Colonic mucosa (tissue), 4 donors: ENCODE measurements at regions of chr5 and their contacts with region 1.

Region 1: DNA sequence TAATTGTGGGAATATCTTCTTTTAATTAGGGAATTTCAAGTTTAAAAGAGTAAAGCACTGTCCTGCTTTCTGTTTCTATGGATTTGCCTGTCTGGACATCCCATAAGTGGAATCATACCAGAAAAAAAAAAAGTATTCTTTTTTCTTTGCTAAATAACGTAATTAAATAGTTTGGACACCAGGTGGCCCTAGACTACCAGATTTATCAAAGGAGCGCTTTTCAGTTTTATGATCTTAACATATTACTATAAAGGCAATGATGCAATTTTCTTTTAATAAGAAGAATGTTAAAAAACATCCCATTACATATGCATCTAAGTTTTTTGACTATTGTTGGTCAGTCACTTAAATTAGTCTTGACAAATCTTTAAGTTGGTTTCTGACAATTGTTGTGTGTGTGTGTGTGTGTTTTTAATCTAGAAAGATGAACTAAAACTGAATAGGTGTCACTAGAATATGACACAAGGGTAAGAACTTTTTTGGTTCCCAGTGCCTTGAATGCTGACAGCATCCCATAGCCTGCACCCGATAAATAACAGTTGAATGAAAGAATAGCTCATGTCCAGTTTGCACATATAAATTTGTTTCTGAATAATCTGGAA is 49.5 kb downstream of the C5orf22 start:
- DNase-seq: no peak
- H3K4me3 ChIP-seq: no peak overlapping the region
- H3K27ac ChIP-seq: no peak overlapping the region
- H3K4me1 ChIP-seq: no peaks in the 10 kb centered on the region
- H3K27me3 ChIP-seq: no peaks in the 10 kb centered on the region
- CTCF ChIP-seq: peak; percentile 32

Region 2: GRCh38 chr5:31626156-31626555 is 44.6 kb after region 1 on chr5:
- intact Hi-C with region 1: no loop called
- DNase-seq: no peak
- H3K4me3 ChIP-seq: no peak overlapping the region
- H3K27ac ChIP-seq: no peak overlapping the region
- H3K4me1 ChIP-seq: no peaks in the 10 kb centered on the region
- H3K27me3 ChIP-seq: no peaks in the 10 kb centered on the region
- CTCF ChIP-seq: no peak

Region 3: GRCh38 chr5:31757806-31758205 is 176.2 kb after region 1 on chr5:
- intact Hi-C with region 1: no loop called
- DNase-seq: no peak
- H3K4me3 ChIP-seq: no peak overlapping the region
- H3K27ac ChIP-seq: no peak overlapping the region
- H3K4me1 ChIP-seq: no peaks in the 10 kb centered on the region
- H3K27me3 ChIP-seq: no peaks in the 10 kb centered on the region
- CTCF ChIP-seq: no peak

Region 4: GRCh38 chr5:31809050-31809870 is 227.7 kb after region 1 on chr5:
- intact Hi-C with region 1: loop called (anchors 2 kb)
- DNase-seq: peak; percentile 45
- H3K4me3 ChIP-seq: no peak overlapping the region
- H3K27ac ChIP-seq: no peak overlapping the region
- H3K4me1 ChIP-seq: no peaks in the 10 kb centered on the region
- H3K27me3 ChIP-seq: no peaks in the 10 kb centered on the region
- CTCF ChIP-seq: peak; percentile 44

Region 5: DNA sequence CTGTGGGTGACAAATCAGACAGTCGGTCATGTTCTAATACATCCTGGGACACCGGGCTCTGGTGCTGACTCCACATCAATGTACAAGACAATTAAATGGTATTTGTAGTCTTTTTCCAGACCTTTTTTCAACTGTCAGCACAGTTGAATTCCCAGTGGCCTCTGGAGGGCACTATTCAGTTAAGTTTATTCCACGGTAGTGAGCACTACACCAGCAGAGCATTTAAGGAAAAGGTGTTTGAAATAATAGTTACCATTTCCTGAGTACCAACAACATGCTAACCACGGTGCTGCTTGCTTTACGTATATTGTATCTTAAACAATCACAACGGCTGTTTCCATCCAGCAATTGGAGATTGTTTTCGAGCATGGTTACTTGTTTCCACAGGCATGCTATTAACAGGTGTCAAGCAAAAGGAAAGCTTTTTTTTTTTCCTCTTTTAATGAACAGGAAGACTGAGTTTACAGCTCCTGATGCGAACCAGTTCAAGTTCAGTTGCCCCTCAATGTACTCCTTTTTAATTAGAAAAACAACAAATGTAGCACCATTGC is 244.0 kb after region 1 on chr5:
- intact Hi-C with region 1: no loop called
- DNase-seq: peak; percentile 34
- H3K4me3 ChIP-seq: no peak overlapping the region
- H3K27ac ChIP-seq: no peak overlapping the region
- H3K4me1 ChIP-seq: no peaks in the 10 kb centered on the region
- H3K27me3 ChIP-seq: no peaks in the 10 kb centered on the region
- CTCF ChIP-seq: peak; percentile 59

Region 6: DNA sequence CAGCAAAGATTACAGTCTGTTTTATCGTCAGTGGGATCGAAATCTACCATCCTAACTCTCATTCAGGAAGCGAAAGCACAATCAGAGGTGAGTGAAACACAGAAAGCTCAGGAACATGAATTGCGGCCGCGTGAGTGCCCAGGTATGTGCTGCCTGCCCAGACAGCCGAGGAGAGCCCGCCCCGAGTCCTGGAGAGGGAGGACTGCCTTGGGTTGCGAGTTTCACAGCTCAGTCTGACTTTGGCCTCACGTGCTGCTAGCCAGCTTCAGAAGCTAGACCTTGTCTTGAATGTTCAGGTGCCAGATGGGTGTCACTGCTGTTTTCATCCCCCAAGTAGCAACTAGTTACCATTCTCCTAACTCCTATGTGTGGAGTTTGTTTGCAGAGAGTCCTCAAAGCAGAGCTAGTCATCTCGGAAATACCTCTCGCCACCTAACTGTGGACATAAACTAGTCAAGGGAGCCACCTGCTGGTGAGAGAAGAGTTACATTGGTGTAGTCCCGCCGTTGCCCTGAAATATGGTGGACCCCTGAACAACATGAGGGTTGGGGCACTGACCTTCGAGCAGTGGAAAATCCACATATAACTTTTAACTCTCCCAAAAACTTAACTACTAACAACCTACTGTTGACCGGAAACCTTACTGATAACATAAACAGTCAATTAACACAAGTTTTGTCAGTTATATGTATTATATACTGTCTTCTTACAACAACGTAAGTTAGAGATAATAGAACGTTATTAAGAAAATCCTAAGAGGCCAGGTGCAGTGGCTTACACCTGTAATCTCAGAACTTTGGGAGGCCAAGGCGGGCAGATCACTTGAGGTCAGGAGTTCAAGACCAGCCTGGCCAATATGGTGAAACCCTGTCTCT is 511.6 kb after region 1 on chr5:
- intact Hi-C with region 1: loop called (anchors 10 kb)
- DNase-seq: peak; percentile 68
- H3K4me3 ChIP-seq: no peak overlapping the region
- H3K27ac ChIP-seq: no peak overlapping the region
- H3K4me1 ChIP-seq: no peaks in the 10 kb centered on the region
- H3K27me3 ChIP-seq: no peaks in the 10 kb centered on the region
- CTCF ChIP-seq: peak; percentile 26

Region 7: GRCh38 chr5:32692036-32692746 is 1110.6 kb after region 1 on chr5:
- intact Hi-C with region 1: no loop called
- DNase-seq: no peak
- H3K4me3 ChIP-seq: no peak overlapping the region
- H3K27ac ChIP-seq: no peak overlapping the region
- H3K4me1 ChIP-seq: no peaks in the 10 kb centered on the region
- H3K27me3 ChIP-seq: no peaks in the 10 kb centered on the region
- CTCF ChIP-seq: no peak